Heart left ventricle (tissue), 16 donors: ENCODE measurements at regions of chr3 and their contacts with region 1.

Region 1: DNA sequence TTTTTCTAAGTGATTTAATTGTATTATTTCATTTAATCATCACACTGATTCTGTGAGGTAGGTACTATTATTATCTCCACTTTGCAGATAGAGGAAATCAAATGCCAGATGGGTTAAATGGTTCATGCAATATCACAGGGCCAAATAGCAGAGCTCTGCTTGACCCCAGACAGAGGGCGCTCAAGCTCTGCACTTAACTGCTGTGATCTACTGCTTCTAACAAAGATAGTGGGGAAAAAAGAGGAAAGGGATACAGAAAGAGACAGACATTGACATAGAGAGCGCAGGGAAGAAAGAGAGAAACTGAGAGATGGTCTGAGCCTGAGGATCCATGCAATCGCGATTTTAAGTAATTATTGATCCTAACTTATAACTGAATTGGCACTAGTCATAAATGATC is 279.1 kb upstream of the THRB start:
- DNase-seq: peak; percentile 25 to 68 (median 45)
- ATAC-seq: peak; percentile 67 to 85 (median 78)
- H3K4me3 ChIP-seq: no peak overlapping the region
- H3K27ac ChIP-seq: no peak overlapping the region
- H3K4me1 ChIP-seq: no peaks in the 10 kb centered on the region
- H3K27me3 ChIP-seq: no peaks in the 10 kb centered on the region
- CTCF ChIP-seq: peak; percentile 53 to 84 (median 74)
- POLR2A ChIP-seq: no peak

Region 2: GRCh38 chr3:24832878-24833277 is 59.1 kb after region 1 on chr3:
- intact Hi-C with region 1: no loop called
- DNase-seq: no peak
- ATAC-seq: no peak
- H3K4me3 ChIP-seq: no peak overlapping the region
- H3K27ac ChIP-seq: no peak overlapping the region
- H3K4me1 ChIP-seq: peaks cover 0 to 20% (median 6%) of the 10 kb centered on the region in 12 donors
- H3K27me3 ChIP-seq: peaks cover 3 to 28% (median 10%) of the 10 kb centered on the region in 9 donors
- CTCF ChIP-seq: no peak
- POLR2A ChIP-seq: no peak

Region 3: DNA sequence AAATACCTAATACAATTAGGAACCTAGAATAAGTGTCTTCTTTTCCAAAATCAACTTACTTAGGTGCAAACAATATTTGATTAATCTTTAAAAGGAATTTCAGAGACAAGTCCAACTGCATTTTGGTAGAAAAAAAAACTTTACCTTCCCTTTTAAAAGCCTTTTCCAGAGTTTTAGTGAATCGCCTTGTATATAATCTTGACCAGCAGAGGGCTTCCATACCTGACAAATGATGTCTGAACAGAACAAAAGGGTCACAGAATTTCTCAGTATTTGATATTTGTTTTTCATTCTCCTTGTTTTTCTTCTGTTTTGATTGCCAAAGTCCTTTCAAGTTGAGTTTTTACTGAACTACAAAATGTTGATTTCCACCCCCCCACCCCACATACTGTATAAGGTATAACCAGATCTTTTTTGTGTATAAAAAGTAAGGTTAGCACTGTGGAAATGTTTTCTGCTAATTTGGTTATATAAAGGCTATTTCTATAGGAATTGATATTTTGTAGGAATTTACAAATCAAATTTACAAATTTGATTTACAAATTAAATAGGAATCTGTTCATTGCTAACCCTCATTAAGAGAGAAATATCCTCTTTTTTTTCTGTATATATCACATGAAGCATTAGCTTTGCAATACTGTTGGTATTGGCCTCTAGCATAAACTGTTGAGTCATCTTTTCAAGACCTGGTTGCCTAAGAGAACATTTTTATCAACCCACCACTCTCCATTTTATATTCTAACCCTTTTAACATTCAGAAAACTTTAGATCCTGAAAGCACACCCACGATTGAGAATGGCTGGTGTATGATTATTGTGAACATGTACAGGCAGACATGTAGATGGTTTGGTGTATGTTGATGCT is 190.2 kb after region 1 on chr3:
- intact Hi-C with region 1: loop called in 1 of 10 experiments (anchors 10 kb)
- DNase-seq: no peak
- ATAC-seq: no peak
- H3K4me3 ChIP-seq: no peak overlapping the region
- H3K27ac ChIP-seq: no peak overlapping the region
- H3K4me1 ChIP-seq: no peaks in the 10 kb centered on the region
- H3K27me3 ChIP-seq: no peaks in the 10 kb centered on the region
- CTCF ChIP-seq: peak; percentile 33 to 68 (median 55)
- POLR2A ChIP-seq: no peak

Region 4: GRCh38 chr3:25021816-25022215 is 248.0 kb after region 1 on chr3:
- intact Hi-C with region 1: loop called in 1 of 10 experiments (anchors 10 kb)
- DNase-seq: no peak
- ATAC-seq: peak in 1 of 4 donors; percentile 61
- H3K4me3 ChIP-seq: no peak overlapping the region
- H3K27ac ChIP-seq: no peak overlapping the region
- H3K4me1 ChIP-seq: no peaks in the 10 kb centered on the region
- H3K27me3 ChIP-seq: no peaks in the 10 kb centered on the region
- CTCF ChIP-seq: peak; percentile 33 to 69 (median 60)
- POLR2A ChIP-seq: no peak

Region 5: GRCh38 chr3:25094932-25095685 is 321.3 kb after region 1 on chr3:
- intact Hi-C with region 1: loop called in 2 of 10 experiments (anchors 5 to 10 kb)
- DNase-seq: no peak
- ATAC-seq: no peak
- H3K4me3 ChIP-seq: no peak overlapping the region
- H3K27ac ChIP-seq: no peak overlapping the region
- H3K4me1 ChIP-seq: peaks cover 0 to 1% (median 0%) of the 10 kb centered on the region in 12 donors
- H3K27me3 ChIP-seq: no peaks in the 10 kb centered on the region
- CTCF ChIP-seq: peak in 6 of 12 donors; percentile 6 to 40 (median 32)
- POLR2A ChIP-seq: no peak

Region 6: GRCh38 chr3:25856902-25857518 is 1083.2 kb after region 1 on chr3:
- intact Hi-C with region 1: loop called in 1 of 10 experiments (anchors 10 kb)
- DNase-seq: no peak
- ATAC-seq: peak in 1 of 4 donors; percentile 32
- H3K4me3 ChIP-seq: no peak overlapping the region
- H3K27ac ChIP-seq: no peak overlapping the region
- H3K4me1 ChIP-seq: no peaks in the 10 kb centered on the region
- H3K27me3 ChIP-seq: no peaks in the 10 kb centered on the region
- CTCF ChIP-seq: peak; percentile 52 to 75 (median 66)
- POLR2A ChIP-seq: no peak